ENCODE measurements at regions of chr9 and their contacts with region 1.

Region 1: GRCh38 chr9:69582544-69583297 is 89.5 kb downstream of the APBA1 start:
- DNase-seq: peak in 4 of 5 donors; percentile 16 to 62 (median 30)
- ATAC-seq: peak in 3 of 4 donors; percentile 45 to 54 (median 45)
- H3K4me3 ChIP-seq: no peak overlapping the region
- H3K27ac ChIP-seq: no peak overlapping the region
- H3K4me1 ChIP-seq: peaks cover 0 to 27% (median 9%) of the 10 kb centered on the region in 12 donors
- H3K27me3 ChIP-seq: no peaks in the 10 kb centered on the region
- CTCF ChIP-seq: no peak
- POLR2A ChIP-seq: no peak

Region 2: GRCh38 chr9:69667306-69667705 is 84.6 kb after region 1 on chr9:
- intact Hi-C with region 1: loop called in 2 of 10 experiments (anchors 10 kb)
- DNase-seq: no peak
- ATAC-seq: no peak
- H3K4me3 ChIP-seq: no peak overlapping the region
- H3K27ac ChIP-seq: no peak overlapping the region
- H3K4me1 ChIP-seq: peaks cover 0 to 15% (median 3%) of the 10 kb centered on the region in 12 donors
- H3K27me3 ChIP-seq: no peaks in the 10 kb centered on the region
- CTCF ChIP-seq: no peak
- POLR2A ChIP-seq: no peak